Caco-2 (cell line): ENCODE measurements at regions of chr2 and their contacts with region 1.

Region 1: GRCh38 chr2:43005245-43005974 is 213.0 kb upstream of the HAAO start:
- DNase-seq: peak; percentile 75 to 93
- H3K4me3 ChIP-seq: peak overlapping the region; percentile 15; the same call in 1 of the 2 replicates
- H3K4me3 Mint-ChIP-seq: peak overlapping the region; percentile 14
- H3K27ac Mint-ChIP-seq: peak overlapping the region; percentile 84
- H3K4me1 ChIP-seq: peaks cover 43% of the 10 kb centered on the region
- H3K4me1 Mint-ChIP-seq: peaks cover 40% of the 10 kb centered on the region
- H3K27me3 ChIP-seq: no peaks in the 10 kb centered on the region
- H3K27me3 Mint-ChIP-seq: no peaks in the 10 kb centered on the region
- CTCF ChIP-seq: no peak

Region 2: GRCh38 chr2:43018179-43019024 is 13.0 kb after region 1 on chr2:
- CTCF ChIA-PET with region 1: interaction called, 4 read pairs
- POLR2A ChIA-PET with region 1: interaction called, 3 read pairs
- intact Hi-C with region 1: loop called (anchors 2 kb)
- DNase-seq: peak; percentile 84 to 88
- H3K4me3 ChIP-seq: no peak overlapping the region
- H3K4me3 Mint-ChIP-seq: no peak overlapping the region
- H3K27ac Mint-ChIP-seq: peak overlapping the region; percentile 24
- H3K4me1 ChIP-seq: peaks cover 44% of the 10 kb centered on the region
- H3K4me1 Mint-ChIP-seq: peaks cover 35% of the 10 kb centered on the region
- H3K27me3 ChIP-seq: no peaks in the 10 kb centered on the region
- H3K27me3 Mint-ChIP-seq: no peaks in the 10 kb centered on the region
- CTCF ChIP-seq: no peak

Region 3: DNA sequence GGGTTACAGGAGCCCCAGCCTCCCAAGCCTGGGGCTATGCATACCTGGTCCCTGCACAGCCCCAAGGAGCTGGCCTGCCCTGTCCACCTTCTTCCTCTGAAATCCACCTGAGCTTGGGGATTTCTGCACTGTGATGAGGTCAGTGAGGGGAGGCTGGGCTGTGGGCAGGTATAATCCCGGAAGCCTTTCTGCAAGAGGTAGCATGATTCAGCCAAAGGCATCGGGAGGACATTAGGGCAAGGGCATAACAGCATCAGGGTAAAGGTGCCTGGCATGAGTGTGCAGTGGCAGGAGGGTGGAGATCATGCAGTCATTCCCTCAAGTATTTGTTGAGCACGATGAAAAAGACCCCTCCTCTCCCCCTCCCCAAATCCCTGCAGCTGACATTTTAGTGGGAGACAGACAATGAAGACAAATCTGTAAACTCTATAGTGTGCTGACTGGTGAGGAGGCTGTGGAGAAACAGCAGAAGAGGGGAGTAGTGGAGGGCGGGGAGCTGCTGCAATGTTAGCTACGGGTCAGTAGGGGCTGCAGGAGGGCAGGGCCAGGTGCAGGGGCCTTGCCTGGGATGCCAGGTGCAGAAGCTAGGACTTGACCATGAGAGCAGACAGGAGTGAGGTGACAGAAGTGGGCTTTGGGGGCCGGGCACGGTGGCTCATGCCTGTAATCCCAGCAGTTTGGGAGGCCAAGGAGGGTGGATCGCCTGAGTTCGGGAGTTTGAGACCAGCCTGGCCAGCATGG is 202.3 kb after region 1 on chr2:
- CTCF ChIA-PET with region 1: no interaction called
- POLR2A ChIA-PET with region 1: no interaction called
- intact Hi-C with region 1: no loop called
- DNase-seq: peak in 1 of 2 experiments; percentile 53
- H3K4me3 ChIP-seq: no peak overlapping the region
- H3K4me3 Mint-ChIP-seq: no peak overlapping the region
- H3K27ac Mint-ChIP-seq: peak overlapping the region; percentile 20
- H3K4me1 ChIP-seq: no peaks in the 10 kb centered on the region
- H3K4me1 Mint-ChIP-seq: peaks cover 8% of the 10 kb centered on the region
- H3K27me3 ChIP-seq: no peaks in the 10 kb centered on the region
- H3K27me3 Mint-ChIP-seq: no peaks in the 10 kb centered on the region
- CTCF ChIP-seq: peak; percentile 31 to 40

Region 4: DNA sequence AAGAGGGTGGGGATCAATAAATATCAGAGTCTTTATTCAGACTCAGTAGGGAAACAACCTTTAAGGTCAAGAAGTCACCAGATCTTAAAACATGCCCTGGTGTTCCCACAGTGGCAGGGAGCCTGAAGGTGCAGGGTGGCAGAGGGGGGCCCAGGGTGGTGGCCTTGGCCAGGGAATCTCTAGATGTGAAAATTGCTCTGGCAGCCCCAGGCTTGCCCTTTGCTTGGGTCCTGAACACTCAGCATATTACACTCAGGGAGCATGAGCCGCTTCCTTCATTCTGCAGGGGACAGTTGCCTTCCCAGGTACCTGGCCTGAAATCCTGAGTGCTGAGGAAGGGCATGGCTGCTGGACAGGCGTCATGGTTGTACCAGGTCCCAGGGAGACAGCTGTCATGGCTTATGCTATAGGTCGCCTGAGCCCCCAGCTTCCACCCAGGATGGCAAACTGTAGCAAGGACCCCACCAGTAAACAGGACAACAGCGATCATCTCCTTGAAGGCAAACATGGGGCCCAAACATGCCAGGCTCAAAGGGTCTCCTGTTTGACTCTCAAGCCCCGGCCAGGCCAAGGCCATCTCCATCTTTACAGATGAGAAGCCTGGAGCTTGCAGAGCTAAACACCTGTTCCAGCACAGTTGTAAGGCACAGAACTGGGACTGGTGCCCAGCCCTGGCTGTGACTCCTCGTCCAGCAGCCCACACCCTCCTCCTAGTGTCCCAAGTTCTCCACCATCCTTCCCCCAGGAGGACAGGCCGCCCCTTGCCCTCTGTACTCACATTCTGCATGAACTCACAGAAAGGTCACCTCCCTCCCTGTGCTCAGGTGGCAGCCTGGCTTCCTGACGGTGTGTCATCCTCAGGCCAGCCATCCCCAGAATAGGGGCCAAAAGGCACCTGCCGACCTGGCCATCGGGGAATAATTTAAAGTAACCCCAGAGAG is 848.0 kb after region 1 on chr2:
- CTCF ChIA-PET with region 1: no interaction called
- POLR2A ChIA-PET with region 1: no interaction called
- intact Hi-C with region 1: no loop called
- DNase-seq: no peak
- H3K4me3 ChIP-seq: no peak overlapping the region
- H3K4me3 Mint-ChIP-seq: no peak overlapping the region
- H3K27ac Mint-ChIP-seq: no peak overlapping the region
- H3K4me1 ChIP-seq: no peaks in the 10 kb centered on the region
- H3K4me1 Mint-ChIP-seq: no peaks in the 10 kb centered on the region
- H3K27me3 ChIP-seq: no peaks in the 10 kb centered on the region
- H3K27me3 Mint-ChIP-seq: peaks cover 32% of the 10 kb centered on the region
- CTCF ChIP-seq: no peak